ENCODE measurements at regions of chr13 and their contacts with region 1.

Region 1: DNA sequence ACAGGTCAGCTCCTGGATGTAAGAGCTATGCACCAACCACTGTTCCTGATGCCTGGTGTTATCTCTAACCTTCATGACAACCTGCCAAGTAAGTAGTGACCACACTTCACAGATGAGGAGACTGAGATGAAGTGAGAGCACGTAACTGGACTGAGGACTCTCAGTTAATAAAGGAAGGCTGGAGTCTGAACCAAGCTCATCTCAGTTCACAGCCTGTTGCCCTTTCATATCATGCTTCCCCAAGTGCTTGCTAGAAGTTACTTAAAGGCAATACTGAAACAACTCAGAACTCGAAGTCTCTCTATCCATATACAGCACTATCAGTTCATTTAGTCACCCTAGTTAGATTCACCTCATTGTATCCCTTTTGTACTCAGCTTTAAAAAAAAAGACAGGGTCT is 119.7 kb downstream of the ABCC4 start:
- DNase-seq: no peak
- ATAC-seq: no peak
- H3K4me3 ChIP-seq: no peak overlapping the region
- H3K27ac ChIP-seq: no peak overlapping the region
- H3K4me1 ChIP-seq: peaks cover 0 to 18% (median 8%) of the 10 kb centered on the region in 12 donors
- H3K27me3 ChIP-seq: no peaks in the 10 kb centered on the region
- CTCF ChIP-seq: no peak
- POLR2A ChIP-seq: no peak

Region 2: GRCh38 chr13:95067303-95067702 is 114.3 kb before region 1 on chr13:
- intact Hi-C with region 1: no loop called
- DNase-seq: no peak
- ATAC-seq: no peak
- H3K4me3 ChIP-seq: no peak overlapping the region
- H3K27ac ChIP-seq: no peak overlapping the region
- H3K4me1 ChIP-seq: no peaks in the 10 kb centered on the region
- H3K27me3 ChIP-seq: no peaks in the 10 kb centered on the region
- CTCF ChIP-seq: no peak
- POLR2A ChIP-seq: no peak

Region 3: DNA sequence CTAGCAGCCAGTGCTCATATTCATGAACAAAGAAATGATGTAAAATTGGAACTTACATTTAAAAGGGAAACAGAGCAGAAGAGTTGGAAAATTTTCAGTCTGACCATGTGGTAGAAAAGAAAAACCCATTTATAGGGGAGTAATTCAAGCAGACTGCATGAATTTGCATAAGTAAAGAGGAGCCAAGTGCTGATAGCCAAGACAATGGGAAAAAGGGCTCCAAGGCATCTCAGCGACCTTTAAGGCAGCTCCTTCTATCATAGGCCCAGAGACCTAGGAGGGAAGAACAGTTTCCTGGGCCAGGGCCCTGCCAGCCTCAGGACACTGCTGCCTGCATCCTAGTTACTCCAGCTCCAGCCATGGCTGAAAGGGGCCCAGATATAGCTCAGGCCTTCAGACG is 502.8 kb after region 1 on chr13:
- intact Hi-C with region 1: loop called in 1 of 10 experiments (anchors 10 kb)
- DNase-seq: no peak
- ATAC-seq: no peak
- H3K4me3 ChIP-seq: no peak overlapping the region
- H3K27ac ChIP-seq: peak overlapping the region in 1 of 12 donors; percentile 12
- H3K4me1 ChIP-seq: peaks cover 2 to 82% (median 26%) of the 10 kb centered on the region in 12 donors
- H3K27me3 ChIP-seq: no peaks in the 10 kb centered on the region
- CTCF ChIP-seq: no peak
- POLR2A ChIP-seq: no peak

Measured in heart left ventricle (tissue), 16 donors.